ENCODE measurements at regions of chr11 and their contacts with region 1.

Region 1: GRCh38 chr11:104531075-104531474 is 367.1 kb upstream of the PDGFD start:
- DNase-seq: no peak
- H3K4me3 Mint-ChIP-seq: no peak overlapping the region
- H3K27ac Mint-ChIP-seq: no peak overlapping the region
- H3K4me1 Mint-ChIP-seq: no peaks in the 10 kb centered on the region
- H3K27me3 Mint-ChIP-seq: peaks cover 2% of the 10 kb centered on the region

Region 2: GRCh38 chr11:104609311-104610085 is 78.4 kb after region 1 on chr11:
- intact Hi-C with region 1: no loop called
- DNase-seq: peak; percentile 24
- H3K4me3 Mint-ChIP-seq: no peak overlapping the region
- H3K27ac Mint-ChIP-seq: no peak overlapping the region
- H3K4me1 Mint-ChIP-seq: peaks cover 27% of the 10 kb centered on the region
- H3K27me3 Mint-ChIP-seq: peaks cover 7% of the 10 kb centered on the region

Region 3: DNA sequence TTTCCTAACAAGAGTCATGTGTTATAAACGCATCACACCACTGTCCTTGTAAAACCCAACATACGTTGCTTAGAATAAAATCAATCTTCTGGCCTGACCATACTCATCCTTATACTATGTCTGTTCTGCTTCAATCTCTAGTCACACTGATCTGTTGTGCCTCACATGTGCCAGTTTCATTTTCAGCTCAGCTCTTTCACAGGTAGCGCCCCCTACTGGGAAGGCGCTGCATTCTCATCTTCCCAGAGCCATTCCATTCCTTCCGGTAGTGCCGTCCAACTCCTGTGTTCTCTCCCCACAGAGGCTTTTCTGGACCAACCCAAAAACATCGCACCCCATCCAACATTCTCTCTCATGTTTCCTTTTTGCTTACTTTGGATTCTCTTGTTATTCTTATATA is 469.7 kb after region 1 on chr11:
- intact Hi-C with region 1: loop called (anchors 1 kb)
- DNase-seq: peak; percentile 17
- H3K4me3 Mint-ChIP-seq: no peak overlapping the region
- H3K27ac Mint-ChIP-seq: no peak overlapping the region
- H3K4me1 Mint-ChIP-seq: peaks cover 6% of the 10 kb centered on the region
- H3K27me3 Mint-ChIP-seq: peaks cover 4% of the 10 kb centered on the region

Region 4: GRCh38 chr11:105862736-105863367 is 1331.8 kb after region 1 on chr11:
- intact Hi-C with region 1: loop called (anchors 2 kb)
- DNase-seq: no peak
- H3K4me3 Mint-ChIP-seq: no peak overlapping the region
- H3K27ac Mint-ChIP-seq: no peak overlapping the region
- H3K4me1 Mint-ChIP-seq: no peaks in the 10 kb centered on the region
- H3K27me3 Mint-ChIP-seq: peaks cover 3% of the 10 kb centered on the region

Measured in activated T-helper 1 cell treated with anti-CD3 and anti-CD28 coated beads, Interleukin-12 subunit alpha, Interleukin-12 subunit beta, Interleukin-2, Interleukin-4 antibody, amounts not matched to agents 30 ng/mL and 10 ng/mL and 1 ng/mL, durations not matched to agents 14 hours and 24 hours and 36 hours (primary cell).